Ascending aorta (tissue), 2 donors: ENCODE measurements at regions of chr10 and their contacts with region 1.

Region 1: DNA sequence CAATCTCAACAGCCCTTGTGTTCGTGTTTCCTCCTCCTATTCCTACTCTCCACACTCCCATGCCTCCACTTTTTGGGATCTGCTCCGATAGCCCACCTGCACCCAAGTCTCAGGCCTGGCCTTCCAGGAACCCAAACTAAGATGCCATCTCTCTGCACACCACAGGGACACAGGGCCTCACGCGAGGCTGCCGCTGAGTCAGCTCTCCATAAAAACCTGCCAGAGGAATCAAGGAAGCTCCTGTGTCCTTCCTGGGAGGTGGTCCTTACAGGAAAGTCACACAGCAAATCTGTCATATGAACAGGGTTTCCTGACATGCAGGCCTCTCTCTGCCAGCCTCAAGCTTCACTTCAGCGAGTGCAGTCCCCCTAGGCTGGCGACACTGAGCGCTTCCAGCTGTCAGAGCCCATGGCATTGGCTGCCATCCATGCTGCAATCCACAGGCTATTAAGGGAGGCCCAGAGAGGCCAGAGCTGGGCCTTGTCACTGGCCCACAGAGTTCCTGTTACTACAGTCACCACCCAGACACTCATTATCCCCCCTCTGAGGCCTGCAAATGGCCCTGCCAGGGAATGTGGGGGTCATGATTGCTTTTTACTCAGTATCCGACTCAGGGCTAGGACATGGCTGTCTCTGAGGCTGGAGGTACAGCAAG is 151.4 kb downstream of the OAT start:
- DNase-seq: peak in 1 of 2 donors; percentile 72
- H3K4me3 ChIP-seq: no peak overlapping the region
- H3K27ac ChIP-seq: peak overlapping the region; percentile 17 to 56
- H3K4me1 ChIP-seq: no peaks in the 10 kb centered on the region
- H3K27me3 ChIP-seq: no peaks in the 10 kb centered on the region
- CTCF ChIP-seq: no peak

Region 2: GRCh38 chr10:123994417-123995081 is 272.8 kb before region 1 on chr10:
- intact Hi-C with region 1: loop called (anchors 10 kb)
- DNase-seq: peak in 1 of 2 donors; percentile 92
- H3K4me3 ChIP-seq: peak overlapping the region; percentile 23 to 56
- H3K27ac ChIP-seq: no peak overlapping the region
- H3K4me1 ChIP-seq: peaks cover 3 to 8% of the 10 kb centered on the region in 2 donors
- H3K27me3 ChIP-seq: peaks cover 14% of the 10 kb centered on the region
- CTCF ChIP-seq: peak; percentile 98 to 100 (median 98)